Endothelial cell of umbilical vein (primary cell): ENCODE measurements at regions of chr5 and their contacts with region 1.

Region 1: GRCh38 chr5:158695595-158696330 is 404.0 kb downstream of the EBF1 start:
- DNase-seq: peak; percentile 75
- H3K4me3 ChIP-seq: no peak overlapping the region
- H3K27ac ChIP-seq: no peak overlapping the region
- H3K4me1 ChIP-seq: no peaks in the 10 kb centered on the region
- H3K27me3 ChIP-seq: no peaks in the 10 kb centered on the region
- CTCF ChIP-seq: peak; percentile 78 to 92
- POLR2A ChIP-seq: no peak

Region 2: DNA sequence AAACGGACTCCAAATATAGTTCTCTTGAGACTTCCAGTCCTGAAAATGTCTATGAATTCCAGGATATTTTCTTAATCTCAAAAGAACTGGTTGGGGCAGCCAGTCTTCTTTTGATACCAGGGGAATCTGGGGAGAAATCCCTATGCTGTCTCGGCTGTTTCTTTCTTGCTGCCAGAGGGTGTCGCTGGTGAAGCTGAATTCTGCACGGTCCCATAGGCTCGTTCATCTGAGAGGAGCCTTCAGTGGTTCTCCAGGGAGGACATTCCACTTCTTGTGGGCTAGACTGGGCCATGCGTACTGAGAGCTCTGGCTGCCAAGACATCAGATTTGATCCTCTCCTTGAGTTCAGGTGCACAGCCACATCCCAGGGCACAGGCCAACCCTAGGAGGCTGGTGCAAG is 681.8 kb before region 1 on chr5:
- CTCF ChIA-PET with region 1: interaction called, 7 read pairs
- POLR2A ChIA-PET with region 1: no interaction called
- dilution Hi-C with region 1: no loop called
- intact Hi-C with region 1: loop called (anchors 1 kb)
- DNase-seq: peak; percentile 29
- H3K4me3 ChIP-seq: no peak overlapping the region
- H3K27ac ChIP-seq: no peak overlapping the region
- H3K4me1 ChIP-seq: no peaks in the 10 kb centered on the region
- H3K27me3 ChIP-seq: no peaks in the 10 kb centered on the region
- CTCF ChIP-seq: peak; percentile 17 to 26
- POLR2A ChIP-seq: no peak

Region 3: DNA sequence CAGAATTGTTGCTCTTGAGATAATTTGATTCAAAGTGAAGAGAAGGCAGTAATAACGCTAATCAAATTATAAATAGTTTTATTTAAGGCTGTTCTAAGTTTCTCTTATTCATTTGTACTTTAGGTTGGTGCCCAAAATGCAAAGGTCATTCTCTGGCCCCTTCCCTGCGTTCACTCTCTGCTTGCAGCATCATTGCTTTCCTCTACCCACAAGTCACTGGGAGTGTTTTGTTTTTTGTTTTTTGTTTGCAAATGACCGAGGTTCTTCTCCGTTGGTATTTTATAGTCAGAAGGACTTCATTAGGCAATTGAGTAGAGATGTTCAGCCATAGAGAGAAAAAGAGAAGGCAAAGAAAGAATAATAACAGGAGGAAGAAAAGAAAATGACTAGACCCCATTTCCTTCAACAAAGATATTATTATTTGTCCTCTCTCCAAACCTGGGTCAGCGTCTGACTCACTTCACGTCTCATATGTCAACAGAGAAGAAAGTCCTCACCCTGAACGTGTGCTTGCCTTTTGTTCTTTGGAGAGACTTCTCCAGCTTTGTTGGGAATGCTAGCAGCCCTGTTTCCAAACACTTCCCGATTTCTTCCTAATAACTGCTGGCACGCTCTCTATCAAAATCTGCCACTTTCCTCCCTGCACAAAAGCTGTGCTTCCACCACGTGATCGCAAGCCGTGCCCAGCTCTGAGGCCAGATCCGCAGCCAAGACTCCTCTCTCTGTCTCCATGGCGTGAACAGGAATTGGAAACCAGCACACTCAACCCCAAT is 284.2 kb after region 1 on chr5:
- CTCF ChIA-PET with region 1: no interaction called
- POLR2A ChIA-PET with region 1: no interaction called
- dilution Hi-C with region 1: no loop called
- intact Hi-C with region 1: no loop called
- DNase-seq: peak; percentile 86
- H3K4me3 ChIP-seq: peak overlapping the region in 1 of 3 experiments; percentile 51
- H3K27ac ChIP-seq: peak overlapping the region; percentile 62
- H3K4me1 ChIP-seq: peaks cover 31% of the 10 kb centered on the region
- H3K27me3 ChIP-seq: no peaks in the 10 kb centered on the region
- CTCF ChIP-seq: no peak
- POLR2A ChIP-seq: no peak

Region 4: GRCh38 chr5:159049844-159050315 is 354.1 kb after region 1 on chr5:
- CTCF ChIA-PET with region 1: interaction called, 4 read pairs
- POLR2A ChIA-PET with region 1: no interaction called
- dilution Hi-C with region 1: no loop called
- intact Hi-C with region 1: loop called (anchors 1 kb)
- DNase-seq: peak; percentile 33
- H3K4me3 ChIP-seq: no peak overlapping the region
- H3K27ac ChIP-seq: no peak overlapping the region
- H3K4me1 ChIP-seq: no peaks in the 10 kb centered on the region
- H3K27me3 ChIP-seq: peaks cover 20 to 28% of the 10 kb centered on the region in 2 experiments
- CTCF ChIP-seq: peak in 1 of 2 donors; percentile 7
- POLR2A ChIP-seq: no peak

Region 5: DNA sequence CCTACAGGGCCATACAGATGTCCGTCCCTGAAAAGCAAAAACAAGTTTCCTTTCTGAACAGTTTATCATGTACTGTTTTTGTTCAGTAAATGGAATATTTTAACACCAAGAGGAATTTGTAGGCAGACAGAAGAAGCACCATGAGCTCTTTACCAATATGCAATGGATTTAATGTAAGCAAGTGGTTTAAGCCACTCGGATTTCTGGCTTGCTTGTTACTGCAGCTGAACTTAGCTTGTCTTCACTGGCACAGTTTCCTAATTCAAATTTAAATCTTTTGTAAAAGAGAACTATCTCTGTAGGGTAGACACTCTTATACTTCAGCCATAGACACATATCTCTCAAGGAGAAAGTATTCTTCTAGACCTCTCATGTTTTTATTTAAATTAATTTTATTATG is 416.7 kb after region 1 on chr5:
- CTCF ChIA-PET with region 1: interaction called, 455 read pairs
- POLR2A ChIA-PET with region 1: interaction called, 7 read pairs
- dilution Hi-C with region 1: no loop called
- intact Hi-C with region 1: no loop called
- DNase-seq: no peak
- H3K4me3 ChIP-seq: no peak overlapping the region
- H3K27ac ChIP-seq: no peak overlapping the region
- H3K4me1 ChIP-seq: no peaks in the 10 kb centered on the region
- H3K27me3 ChIP-seq: peaks cover 0 to 11% of the 10 kb centered on the region in 2 experiments
- CTCF ChIP-seq: no peak
- POLR2A ChIP-seq: no peak